Natural killer cell (primary cell): ENCODE measurements at regions of chr12 and their contacts with region 1.

Region 1: GRCh38 chr12:104986022-104986941 is at the start of gene NOPCHAP1:
- DNase-seq: peak; percentile 80 to 89
- ATAC-seq: peak; percentile 96 to 98 (median 97)
- H3K4me3 ChIP-seq: peak within 1 kb of the TSS; percentile 64
- H3K4me3 Mint-ChIP-seq: peak within 1 kb of the TSS; percentile 93
- H3K27ac ChIP-seq: peak within 1 kb of the TSS; percentile 29
- H3K27ac Mint-ChIP-seq: peak within 1 kb of the TSS; percentile 29 to 78
- H3K4me1 ChIP-seq: peaks cover 10% of the 10 kb centered on the region
- H3K4me1 Mint-ChIP-seq: peaks cover 27 to 36% of the 10 kb centered on the region in 2 donors
- H3K27me3 ChIP-seq: no peaks in the 10 kb centered on the region
- H3K27me3 Mint-ChIP-seq: peaks cover 6 to 17% of the 10 kb centered on the region in 2 donors
- CTCF ChIP-seq: no peak
- total RNA-seq, gene NOPCHAP1: 8.0 to 9.5 (median 8.6) TPM

Region 2: GRCh38 chr12:104958009-104958945 is 28.0 kb before region 1 on chr12 and contains the start of gene SLC41A2:
- intact Hi-C with region 1: loop called (anchors 2 kb)
- DNase-seq: peak; percentile 79 to 88
- ATAC-seq: peak; percentile 83 to 94 (median 89)
- H3K4me3 ChIP-seq: peak within 1 kb of the TSS; percentile 70
- H3K4me3 Mint-ChIP-seq: peak within 1 kb of the TSS; percentile 92
- H3K27ac ChIP-seq: peak within 1 kb of the TSS; percentile 55
- H3K27ac Mint-ChIP-seq: peak within 1 kb of the TSS; percentile 79 to 93
- H3K4me1 ChIP-seq: peaks cover 13% of the 10 kb centered on the region
- H3K4me1 Mint-ChIP-seq: peaks cover 12 to 19% of the 10 kb centered on the region in 2 donors
- H3K27me3 ChIP-seq: peaks cover 7% of the 10 kb centered on the region
- H3K27me3 Mint-ChIP-seq: peaks cover 19 to 27% of the 10 kb centered on the region in 2 donors
- CTCF ChIP-seq: no peak
- total RNA-seq, gene SLC41A2: 1.3 to 3.5 (median 1.7) TPM